ENCODE measurements at regions of chr1 and their contacts with region 1.

Region 1: GRCh38 chr1:156146020-156146768 is 7.2 kb upstream of the SEMA4A start:
- DNase-seq: peak; percentile 97
- H3K4me3 Mint-ChIP-seq: peak overlapping the region; percentile 24
- H3K27ac Mint-ChIP-seq: no peak overlapping the region
- H3K4me1 Mint-ChIP-seq: peaks cover 29% of the 10 kb centered on the region
- H3K27me3 Mint-ChIP-seq: no peaks in the 10 kb centered on the region
- CTCF ChIP-seq: peak; percentile 60

Region 2: GRCh38 chr1:156193488-156194299 is 47.5 kb after region 1 on chr1 and contains the start of gene SLC25A44:
- CTCF ChIA-PET with region 1: interaction called, 5 read pairs
- POLR2A ChIA-PET with region 1: interaction called, 11 read pairs
- intact Hi-C with region 1: no loop called
- DNase-seq: peak; percentile 100
- H3K4me3 Mint-ChIP-seq: peak within 1 kb of the TSS; percentile 96
- H3K27ac Mint-ChIP-seq: peak within 1 kb of the TSS; percentile 90
- H3K4me1 Mint-ChIP-seq: peaks cover 16% of the 10 kb centered on the region
- H3K27me3 Mint-ChIP-seq: no peaks in the 10 kb centered on the region
- CTCF ChIP-seq: peak; percentile 49
- total RNA-seq, gene SLC25A44: 28.7 and 32.3 TPM in 2 replicates

Region 3: GRCh38 chr1:156241311-156241811 is 95.2 kb after region 1 on chr1:
- CTCF ChIA-PET with region 1: interaction called, 10 read pairs
- POLR2A ChIA-PET with region 1: interaction called, 5 read pairs
- intact Hi-C with region 1: no loop called
- DNase-seq: peak; percentile 91
- H3K4me3 Mint-ChIP-seq: no peak overlapping the region
- H3K27ac Mint-ChIP-seq: peak overlapping the region; percentile 42
- H3K4me1 Mint-ChIP-seq: peaks cover 22% of the 10 kb centered on the region
- H3K27me3 Mint-ChIP-seq: no peaks in the 10 kb centered on the region
- CTCF ChIP-seq: no peak

Measured in MCF 10A (cell line).